CD8-positive, alpha-beta T cell (primary cell): ENCODE measurements at regions of chr17 and their contacts with region 1.

Region 1: GRCh38 chr17:75238684-75239191 is 22.7 kb downstream of the GGA3 start:
- DNase-seq: peak; percentile 24 to 78 (median 63)
- ATAC-seq: peak; percentile 47
- H3K4me3 ChIP-seq: no peak overlapping the region
- H3K4me3 Mint-ChIP-seq: no peak overlapping the region
- H3K27ac ChIP-seq: no peak overlapping the region
- H3K27ac Mint-ChIP-seq: peak overlapping the region; percentile 58
- H3K4me1 ChIP-seq: peaks cover 6% of the 10 kb centered on the region
- H3K4me1 Mint-ChIP-seq: peaks cover 24% of the 10 kb centered on the region
- H3K27me3 ChIP-seq: no peaks in the 10 kb centered on the region
- H3K27me3 Mint-ChIP-seq: no peaks in the 10 kb centered on the region
- CTCF ChIP-seq: peak; percentile 86

Region 2: DNA sequence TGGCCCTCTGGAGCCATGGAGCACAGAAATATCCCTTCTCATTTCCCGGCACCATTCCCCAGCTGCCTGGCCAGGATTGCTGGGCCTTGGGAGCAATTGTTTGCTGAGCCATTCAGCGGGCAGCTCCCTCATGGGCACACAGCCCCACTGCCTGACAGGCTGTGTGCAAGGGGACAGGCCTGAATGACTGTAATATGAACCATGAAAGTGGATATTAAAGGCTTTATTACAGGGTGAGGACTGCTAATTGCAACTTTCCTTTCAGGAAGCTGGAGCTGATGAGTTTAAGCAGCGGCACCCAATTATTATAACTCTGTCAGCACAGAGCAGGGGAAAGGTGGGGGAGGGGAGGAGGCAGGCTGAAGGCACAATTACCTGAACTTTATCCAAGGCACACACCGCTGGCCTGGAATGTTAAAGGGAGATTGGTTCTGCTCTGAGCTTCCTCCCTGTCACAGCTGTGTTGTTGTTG is 1434.7 kb before region 1 on chr17:
- CTCF ChIA-PET with region 1: no interaction called
- POLR2A ChIA-PET with region 1: no interaction called
- intact Hi-C with region 1: no loop called
- DNase-seq: no peak
- ATAC-seq: no peak
- H3K4me3 ChIP-seq: no peak overlapping the region
- H3K4me3 Mint-ChIP-seq: no peak overlapping the region
- H3K27ac ChIP-seq: no peak overlapping the region
- H3K27ac Mint-ChIP-seq: no peak overlapping the region
- H3K4me1 ChIP-seq: no peaks in the 10 kb centered on the region
- H3K4me1 Mint-ChIP-seq: peaks cover 4% of the 10 kb centered on the region
- H3K27me3 ChIP-seq: no peaks in the 10 kb centered on the region
- H3K27me3 Mint-ChIP-seq: peaks cover 6% of the 10 kb centered on the region
- CTCF ChIP-seq: no peak

Region 3: DNA sequence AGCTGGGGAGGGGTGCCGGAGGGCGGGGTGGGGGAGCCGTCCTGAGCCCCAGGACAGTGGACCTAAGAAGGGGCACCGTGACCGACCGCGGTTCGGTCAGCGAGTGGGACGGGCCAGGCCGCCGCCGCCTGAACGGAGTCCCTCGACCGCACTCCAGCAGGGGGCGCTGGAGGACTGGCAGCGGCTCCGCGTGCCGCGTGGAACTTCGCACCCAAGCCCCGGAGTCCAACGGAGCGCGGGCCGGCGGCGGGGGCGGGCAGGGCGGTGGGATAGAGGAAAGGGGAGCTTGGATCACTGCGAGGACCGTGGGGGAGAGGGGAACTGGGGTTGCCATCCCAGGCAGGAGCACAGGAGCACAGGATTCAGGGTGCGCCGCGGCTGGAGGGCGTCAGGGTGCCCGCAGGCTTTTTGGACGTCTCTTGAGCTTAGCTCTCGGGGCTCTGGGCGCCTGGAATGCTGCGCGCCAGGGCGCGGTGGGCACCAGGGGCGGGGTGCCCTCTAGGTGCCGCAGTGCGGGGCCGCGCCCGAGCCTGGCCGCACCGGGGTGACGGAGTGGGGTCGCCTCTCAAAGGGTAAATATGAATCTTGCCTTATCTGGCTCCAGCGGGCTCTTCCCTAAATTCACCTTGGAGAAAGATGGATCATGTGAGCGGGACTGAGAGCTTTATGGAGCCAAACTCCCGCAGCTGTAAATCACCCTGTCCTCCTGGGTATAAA is 315.0 kb before region 1 on chr17:
- CTCF ChIA-PET with region 1: no interaction called
- POLR2A ChIA-PET with region 1: no interaction called
- intact Hi-C with region 1: loop called in 1 of 2 experiments (anchors 2 kb)
- DNase-seq: peak; percentile 45 to 84 (median 73)
- ATAC-seq: peak; percentile 67
- H3K4me3 ChIP-seq: peak overlapping the region; percentile 29 to 41
- H3K4me3 Mint-ChIP-seq: peak overlapping the region; percentile 67
- H3K27ac ChIP-seq: no peak overlapping the region
- H3K27ac Mint-ChIP-seq: no peak overlapping the region
- H3K4me1 ChIP-seq: peaks cover 13% of the 10 kb centered on the region
- H3K4me1 Mint-ChIP-seq: peaks cover 8% of the 10 kb centered on the region
- H3K27me3 ChIP-seq: peaks cover 27% of the 10 kb centered on the region in 2 experiments
- H3K27me3 Mint-ChIP-seq: peaks cover 55% of the 10 kb centered on the region
- CTCF ChIP-seq: peak; percentile 86

Region 4: DNA sequence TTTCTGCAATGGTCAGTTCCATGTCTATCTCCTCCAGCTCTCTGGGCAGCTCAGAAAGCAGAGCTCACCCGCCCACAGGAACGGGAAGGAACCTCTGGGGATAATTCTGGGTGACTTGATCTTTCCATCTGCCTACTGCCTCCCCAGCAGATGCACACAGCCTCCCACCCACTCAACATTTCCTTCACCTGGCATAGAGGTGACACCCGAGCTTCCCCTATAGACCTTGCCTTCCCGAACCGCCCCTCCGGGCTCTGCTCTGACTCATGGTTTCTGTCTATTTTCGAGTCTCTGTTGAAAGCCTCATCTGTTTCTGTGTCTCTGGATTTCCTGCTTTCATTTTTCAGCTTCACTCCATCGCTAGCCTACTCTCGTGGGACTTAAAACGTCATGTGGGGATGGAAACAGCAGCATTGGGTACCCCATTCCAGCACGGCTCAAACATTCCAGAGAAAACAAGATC is 11.3 kb after region 1 on chr17:
- CTCF ChIA-PET with region 1: interaction called, 28 read pairs
- POLR2A ChIA-PET with region 1: interaction called, 3 read pairs
- intact Hi-C with region 1: no loop called
- DNase-seq: peak in 8 of 9 experiments; percentile 32 to 71 (median 59)
- ATAC-seq: peak; percentile 97
- H3K4me3 ChIP-seq: peak overlapping the region in 1 of 2 experiments; percentile 1
- H3K4me3 Mint-ChIP-seq: peak overlapping the region; percentile 61
- H3K27ac ChIP-seq: peak overlapping the region; percentile 0 to 62
- H3K27ac Mint-ChIP-seq: peak overlapping the region; percentile 81
- H3K4me1 ChIP-seq: peaks cover 11% of the 10 kb centered on the region
- H3K4me1 Mint-ChIP-seq: peaks cover 42% of the 10 kb centered on the region
- H3K27me3 ChIP-seq: no peaks in the 10 kb centered on the region
- H3K27me3 Mint-ChIP-seq: no peaks in the 10 kb centered on the region
- CTCF ChIP-seq: no peak